BJ (cell line): ENCODE measurements at regions of chr1 and their contacts with region 1.

Region 1: GRCh38 chr1:146036965-146037646 is 15.6 kb upstream of the HJV start:
- DNase-seq: no peak
- H3K4me3 ChIP-seq: peak overlapping the region; percentile 50
- H3K27me3 ChIP-seq: no peaks in the 10 kb centered on the region
- CTCF ChIP-seq: no peak

Region 2: DNA sequence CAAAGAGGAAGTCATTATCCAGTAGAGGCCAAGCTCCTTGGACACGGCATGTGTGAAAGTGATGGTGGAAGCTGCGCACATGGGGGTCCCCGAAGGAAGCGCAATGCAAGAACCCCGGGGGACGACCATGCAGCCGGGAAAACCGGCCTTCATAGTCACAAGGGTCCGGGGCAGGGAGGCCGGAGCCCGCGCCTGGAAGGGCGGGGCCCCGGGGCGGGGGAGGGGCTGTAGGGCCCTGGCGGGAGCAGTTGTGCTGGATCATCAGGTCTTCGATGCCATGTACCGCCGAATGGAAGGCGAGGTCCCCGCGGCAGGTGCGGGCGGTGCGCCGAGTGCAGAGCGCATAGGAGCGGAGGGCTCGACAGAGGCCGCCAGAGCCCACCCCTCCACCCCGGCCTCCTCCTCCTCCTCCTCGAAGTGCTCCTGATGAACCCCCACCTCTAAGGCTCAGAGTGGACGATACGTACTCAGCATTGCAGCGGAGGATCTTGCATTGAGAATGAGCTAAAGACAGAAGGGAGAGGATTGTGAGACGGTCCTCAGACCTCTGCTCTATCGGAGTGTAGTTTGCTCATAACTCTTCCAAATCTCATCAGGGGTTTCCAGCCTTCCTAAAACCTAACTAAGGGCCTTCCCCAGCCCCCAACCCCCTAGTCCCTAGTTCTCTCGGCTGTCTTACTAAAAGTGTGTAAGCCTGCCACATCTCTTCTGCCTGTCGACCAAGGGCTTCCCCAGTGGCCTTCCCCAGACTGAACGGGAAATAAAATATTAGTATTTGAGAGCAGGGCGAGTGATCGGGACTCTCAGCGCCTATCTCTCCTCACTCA is 17.7 kb before region 1 on chr1:
- CTCF ChIA-PET with region 1: interaction called, 26 read pairs
- POLR2A ChIA-PET with region 1: no interaction called
- DNase-seq: no peak
- H3K4me3 ChIP-seq: no peak overlapping the region
- H3K27me3 ChIP-seq: peaks cover 3% of the 10 kb centered on the region; the same call in 1 of the 2 replicates
- CTCF ChIP-seq: no peak

Region 3: DNA sequence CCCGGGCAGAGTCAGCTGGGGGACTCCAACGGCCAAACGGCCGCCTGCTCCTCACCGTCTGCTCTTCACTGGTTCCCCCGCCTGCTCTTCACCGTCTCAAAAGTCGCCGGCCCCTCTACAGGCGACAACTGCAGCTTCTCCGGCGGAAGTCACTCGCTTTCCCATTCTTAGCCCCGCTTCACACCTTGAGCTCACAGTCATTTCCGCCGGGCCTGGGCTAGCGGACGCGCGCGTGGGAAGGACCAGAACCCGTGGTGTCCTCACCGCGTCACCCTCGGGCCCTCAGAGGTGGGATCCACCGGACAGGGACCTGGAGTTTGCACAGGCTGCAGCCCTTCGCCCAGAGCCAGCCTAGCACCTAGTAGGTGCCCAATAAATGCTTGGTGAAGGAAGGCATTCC is 12.3 kb after region 1 on chr1:
- CTCF ChIA-PET with region 1: interaction called, 8 read pairs
- POLR2A ChIA-PET with region 1: interaction called, 32 read pairs
- DNase-seq: no peak
- H3K4me3 ChIP-seq: no peak overlapping the region
- H3K27me3 ChIP-seq: no peaks in the 10 kb centered on the region
- CTCF ChIP-seq: no peak